Right cardiac atrium (tissue), 5 donors: ENCODE measurements at regions of chr17 and their contacts with region 1.

Region 1: DNA sequence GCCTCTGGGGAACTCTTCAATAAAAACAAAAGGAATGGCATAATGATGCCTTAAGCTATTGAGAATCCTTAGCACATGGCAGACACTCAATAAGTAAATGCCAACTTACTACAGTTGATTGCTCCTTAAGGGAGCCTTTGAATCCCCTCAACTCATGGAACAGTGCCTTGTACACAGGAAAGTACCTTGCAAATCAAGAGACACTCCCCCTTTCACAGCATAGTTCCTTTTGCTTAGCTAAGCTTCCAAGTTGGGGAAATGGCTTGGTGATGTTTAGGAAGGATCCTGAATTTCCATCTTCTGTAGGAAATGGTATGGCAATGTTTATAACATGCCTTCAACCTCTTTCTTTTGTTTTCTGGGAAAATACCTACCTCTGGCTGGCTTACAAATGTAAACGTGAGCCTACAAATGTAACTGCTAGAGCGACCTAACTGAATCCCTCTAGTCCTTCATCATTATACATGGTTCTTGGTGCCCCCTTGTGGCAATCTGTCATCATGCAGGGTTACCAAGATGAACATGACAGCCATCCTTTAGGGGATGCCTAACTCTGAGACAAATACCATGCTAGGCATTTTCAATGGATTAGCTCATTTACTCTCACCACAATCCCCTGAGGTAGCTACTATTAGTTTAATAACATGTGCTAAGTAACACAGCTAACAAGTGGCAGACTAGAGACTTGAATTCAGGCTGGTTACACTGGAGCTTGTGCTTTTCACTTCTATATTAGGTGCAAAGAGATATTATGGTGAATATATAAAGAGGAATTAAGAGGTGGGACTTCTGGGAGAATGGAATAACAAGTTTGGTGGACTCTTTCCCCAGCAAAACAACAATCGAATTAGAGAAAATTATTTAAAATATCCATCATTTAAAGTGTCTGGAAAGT is 65.0 kb downstream of the MMD start:
- DNase-seq: peak; percentile 56 to 81 (median 64)
- ATAC-seq: peak; percentile 80 to 86
- H3K4me3 ChIP-seq: no peak overlapping the region
- H3K27ac ChIP-seq: no peak overlapping the region
- H3K4me1 ChIP-seq: no peaks in the 10 kb centered on the region
- H3K27me3 ChIP-seq: no peaks in the 10 kb centered on the region

Region 2: DNA sequence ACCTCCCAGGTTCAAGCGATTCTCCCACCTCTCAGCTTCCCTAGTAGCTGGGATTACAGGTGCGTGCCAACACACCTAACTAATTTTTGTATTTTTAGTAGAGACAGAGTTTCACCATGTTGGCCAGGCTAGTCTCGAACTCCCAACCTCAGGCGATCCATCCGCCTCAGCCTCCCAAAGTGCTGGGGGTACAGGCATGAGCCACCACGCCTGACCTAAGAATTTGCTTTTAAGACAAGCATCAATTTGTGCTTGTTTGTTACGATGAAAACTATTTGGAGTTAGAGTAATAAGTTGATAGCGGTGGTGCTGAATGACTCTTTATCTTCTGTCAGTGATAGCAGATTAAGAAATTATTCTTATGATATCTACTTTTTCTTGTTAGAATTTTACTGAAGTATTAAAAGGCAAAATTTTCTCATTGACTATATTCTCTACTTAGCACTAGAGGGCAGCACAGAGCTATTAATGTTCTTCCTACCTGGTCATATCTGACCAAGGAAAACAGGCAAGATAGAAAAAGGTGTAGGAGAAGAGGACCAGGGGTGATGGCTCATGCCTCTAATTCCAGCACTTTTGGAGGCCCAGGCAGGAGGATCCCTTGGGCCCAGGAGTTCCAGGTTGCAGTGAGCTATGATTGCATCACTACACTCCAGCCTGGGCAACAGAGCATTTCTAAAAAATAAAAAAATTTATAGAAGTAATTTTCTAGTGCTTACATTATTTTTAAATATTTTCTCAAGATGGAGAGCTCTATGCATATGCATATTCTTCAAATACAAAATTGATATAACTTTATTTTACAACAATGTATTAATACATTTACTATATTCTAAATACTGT is 363.7 kb before region 1 on chr17:
- intact Hi-C with region 1: loop called in 1 of 4 experiments (anchors 5 kb)
- DNase-seq: no peak
- ATAC-seq: peak in 1 of 2 donors; percentile 31
- H3K4me3 ChIP-seq: no peak overlapping the region
- H3K27ac ChIP-seq: no peak overlapping the region
- H3K4me1 ChIP-seq: no peaks in the 10 kb centered on the region
- H3K27me3 ChIP-seq: no peaks in the 10 kb centered on the region